PC-3 (cell line): ENCODE measurements at regions of chr20 and their contacts with region 1.

Region 1: DNA sequence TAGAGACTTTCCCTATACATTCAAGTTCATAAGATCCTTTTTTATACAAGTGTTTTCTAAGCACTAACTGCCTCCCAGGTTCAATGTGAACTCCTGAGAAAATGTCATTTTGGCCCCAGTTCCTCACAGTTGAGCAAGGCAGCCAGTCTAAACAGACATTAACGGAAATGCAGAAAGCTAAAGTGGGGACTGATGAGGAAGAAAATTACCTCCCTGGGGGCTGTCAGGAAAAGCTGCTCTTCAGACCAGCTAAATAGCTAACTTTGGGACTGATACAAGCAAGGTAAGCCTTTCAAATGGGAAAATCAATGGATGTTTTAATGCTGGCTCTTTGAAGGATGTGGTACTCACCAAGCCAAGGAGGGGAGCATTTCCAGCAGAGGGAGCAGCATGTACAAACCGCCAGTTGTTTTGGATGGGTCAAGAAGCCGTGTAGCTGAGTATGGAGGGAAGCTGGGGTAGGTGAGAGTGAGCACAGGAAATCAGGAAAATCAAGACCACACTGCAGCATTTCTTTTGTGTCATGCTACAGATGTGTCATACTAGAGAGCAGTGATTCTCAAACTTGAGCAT is 180.8 kb upstream of the CHD6 start:
- DNase-seq: no peak
- ATAC-seq: no peak
- H3K4me3 ChIP-seq: no peak overlapping the region
- H3K27ac ChIP-seq: no peak overlapping the region
- H3K4me1 ChIP-seq: no peaks in the 10 kb centered on the region
- H3K27me3 ChIP-seq: no peaks in the 10 kb centered on the region
- CTCF ChIP-seq: no peak

Region 2: DNA sequence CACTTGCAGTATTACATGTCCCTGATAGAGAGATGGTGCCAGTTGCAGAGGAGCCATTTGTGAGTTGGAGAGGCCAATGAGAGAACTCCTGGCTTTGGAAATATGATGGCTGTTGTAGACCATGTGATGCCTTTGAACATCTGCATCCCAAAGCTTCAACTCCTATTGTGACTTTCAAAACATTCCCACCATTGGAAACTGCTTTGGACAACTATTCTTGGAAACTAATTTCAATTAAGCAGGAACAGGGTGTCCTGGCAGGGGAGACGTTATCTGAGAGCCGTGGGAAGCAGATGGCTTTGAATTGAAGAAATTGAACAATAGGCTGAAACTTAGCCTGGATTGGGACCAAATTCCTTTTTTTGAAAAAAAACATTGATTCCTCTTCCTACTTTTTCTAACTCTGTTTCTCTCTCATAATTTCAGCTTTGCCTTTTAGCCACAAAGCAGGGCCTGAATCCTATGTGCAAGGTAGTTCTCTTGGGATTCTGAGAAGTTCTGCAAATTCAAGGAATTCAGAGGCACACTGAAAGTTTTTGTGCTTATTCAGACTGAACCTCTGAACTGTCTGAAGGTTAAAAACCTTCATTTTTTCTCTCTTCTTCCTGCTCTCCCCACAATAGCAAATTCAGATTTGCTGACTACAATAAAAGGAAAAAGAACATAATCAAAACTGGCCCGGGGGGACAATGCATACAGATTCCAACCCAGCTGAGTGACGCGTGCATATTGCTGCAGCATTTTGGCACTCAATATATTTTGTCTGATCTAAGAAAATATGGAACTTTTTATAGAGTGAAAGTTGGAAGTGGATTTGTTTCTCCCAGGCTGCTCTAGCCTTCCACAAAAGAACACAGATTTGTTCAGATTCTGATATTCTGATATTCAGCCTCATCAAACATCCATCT is 539.5 kb after region 1 on chr20:
- CTCF ChIA-PET with region 1: no interaction called
- POLR2A ChIA-PET with region 1: interaction called, 27 read pairs
- intact Hi-C with region 1: no loop called
- DNase-seq: no peak
- ATAC-seq: no peak
- H3K4me3 ChIP-seq: no peak overlapping the region
- H3K27ac ChIP-seq: no peak overlapping the region
- H3K4me1 ChIP-seq: no peaks in the 10 kb centered on the region
- H3K27me3 ChIP-seq: no peaks in the 10 kb centered on the region
- CTCF ChIP-seq: no peak